Activated CD4-positive, alpha-beta T cell treated with anti-CD3 and anti-CD28 coated beads for 36 hours (primary cell): ENCODE measurements at regions of chr2 and their contacts with region 1.

Region 1: DNA sequence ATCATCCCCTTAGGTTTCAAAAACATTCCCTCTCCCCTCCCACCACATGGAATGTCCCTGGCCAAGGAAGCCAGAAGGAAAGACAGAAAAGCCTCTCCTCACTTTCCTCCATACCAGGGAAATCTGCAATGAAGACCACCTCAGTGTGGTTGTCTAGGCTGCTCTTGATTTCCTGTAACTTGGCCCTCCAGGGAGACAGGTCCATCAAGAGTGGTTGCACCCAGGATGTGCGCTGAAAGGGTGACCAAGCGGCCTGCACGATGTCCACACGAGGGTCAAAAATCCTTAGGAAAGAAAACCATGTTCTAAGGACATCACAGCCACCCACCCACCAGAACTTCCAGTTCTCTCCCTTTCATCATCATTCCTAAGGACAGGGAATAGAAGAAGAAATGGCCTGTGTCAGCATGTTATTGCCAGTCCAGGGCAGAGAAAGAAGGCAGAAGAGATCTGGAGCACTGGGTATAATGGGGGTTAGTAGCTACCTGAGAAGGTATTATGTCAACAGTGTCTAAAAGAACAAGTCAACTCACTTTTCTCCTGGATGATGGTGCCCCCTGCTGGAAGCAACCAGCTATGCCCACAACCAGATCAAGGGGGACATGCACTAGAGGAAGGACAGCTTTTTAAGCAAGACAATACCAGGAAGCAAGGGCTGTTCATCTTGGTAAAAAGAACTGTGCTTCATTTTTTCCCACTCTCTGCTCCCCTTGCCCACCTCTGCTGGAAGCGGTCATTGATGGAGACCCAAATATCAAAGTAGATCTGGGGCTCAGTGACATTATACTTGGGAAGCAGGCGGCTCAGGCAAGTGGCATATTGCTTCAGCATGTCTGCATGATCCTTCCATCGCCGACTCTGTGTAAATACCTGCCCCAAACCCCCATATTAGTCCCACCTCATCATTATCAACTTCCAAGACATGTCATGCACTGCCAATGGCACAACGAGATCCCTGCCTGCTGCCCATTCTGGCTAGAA is 9.3 kb downstream of the GGCX start:
- DNase-seq: peak; percentile 92
- ATAC-seq: peak; percentile 88
- H3K4me3 Mint-ChIP-seq: no peak overlapping the region
- H3K27ac Mint-ChIP-seq: no peak overlapping the region
- H3K4me1 Mint-ChIP-seq: peaks cover 2% of the 10 kb centered on the region
- H3K27me3 Mint-ChIP-seq: no peaks in the 10 kb centered on the region

Region 2: DNA sequence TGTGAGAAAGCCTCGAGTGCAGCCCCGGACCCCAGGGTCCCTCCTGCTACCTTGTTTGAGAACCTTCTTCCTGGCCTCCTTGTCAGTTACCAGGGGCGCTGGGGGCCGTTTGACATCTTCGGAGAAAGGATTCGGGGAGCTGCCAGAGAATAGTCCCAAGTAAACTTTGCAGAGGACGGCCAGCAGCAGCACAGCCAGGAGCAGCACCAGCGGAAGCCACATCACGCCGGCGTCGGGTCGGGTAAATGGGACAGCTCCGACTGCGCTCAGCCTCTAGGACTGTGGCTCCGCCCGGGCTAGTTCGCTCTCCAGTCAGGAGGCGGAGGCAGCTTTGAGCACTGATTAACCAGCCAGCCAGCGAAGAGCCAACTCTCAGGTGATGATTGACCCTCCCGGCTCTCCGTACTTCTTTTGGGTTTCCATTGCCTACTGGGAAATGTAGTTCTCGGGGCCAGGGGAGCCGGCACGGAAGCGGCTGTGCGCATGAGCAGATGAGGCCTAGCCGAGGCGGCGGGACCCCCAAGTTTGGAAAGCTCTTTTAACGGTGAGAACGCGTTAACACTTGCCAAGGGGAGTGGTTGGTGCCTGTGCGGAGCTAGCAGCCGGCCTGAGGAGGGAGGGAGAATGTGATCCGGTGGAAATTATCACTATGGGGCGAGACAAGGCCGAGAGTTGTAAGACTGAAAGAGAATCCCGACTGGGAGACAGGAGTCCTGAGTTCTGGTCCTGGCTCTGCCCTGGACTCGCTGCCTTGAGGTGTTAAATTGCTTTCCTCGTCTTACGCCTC is 197.5 kb before region 1 on chr2 and contains the starts of genes ELMOD3 and RETSAT:
- CTCF ChIA-PET with region 1: interaction called, 6 read pairs
- POLR2A ChIA-PET with region 1: interaction called, 4 read pairs
- intact Hi-C with region 1: loop called in 1 of 2 experiments (anchors 1 kb)
- DNase-seq: peak; percentile 98
- ATAC-seq: peak; percentile 100
- H3K4me3 Mint-ChIP-seq: peak within 1 kb of the TSS; percentile 89
- H3K27ac Mint-ChIP-seq: peak within 1 kb of the TSS; percentile 99
- H3K4me1 Mint-ChIP-seq: peaks cover 34% of the 10 kb centered on the region
- H3K27me3 Mint-ChIP-seq: no peaks in the 10 kb centered on the region
- total RNA-seq, gene ELMOD3: 11.2 to 12.9 TPM
- total RNA-seq, gene RETSAT: 18.1 to 18.7 TPM

Region 3: DNA sequence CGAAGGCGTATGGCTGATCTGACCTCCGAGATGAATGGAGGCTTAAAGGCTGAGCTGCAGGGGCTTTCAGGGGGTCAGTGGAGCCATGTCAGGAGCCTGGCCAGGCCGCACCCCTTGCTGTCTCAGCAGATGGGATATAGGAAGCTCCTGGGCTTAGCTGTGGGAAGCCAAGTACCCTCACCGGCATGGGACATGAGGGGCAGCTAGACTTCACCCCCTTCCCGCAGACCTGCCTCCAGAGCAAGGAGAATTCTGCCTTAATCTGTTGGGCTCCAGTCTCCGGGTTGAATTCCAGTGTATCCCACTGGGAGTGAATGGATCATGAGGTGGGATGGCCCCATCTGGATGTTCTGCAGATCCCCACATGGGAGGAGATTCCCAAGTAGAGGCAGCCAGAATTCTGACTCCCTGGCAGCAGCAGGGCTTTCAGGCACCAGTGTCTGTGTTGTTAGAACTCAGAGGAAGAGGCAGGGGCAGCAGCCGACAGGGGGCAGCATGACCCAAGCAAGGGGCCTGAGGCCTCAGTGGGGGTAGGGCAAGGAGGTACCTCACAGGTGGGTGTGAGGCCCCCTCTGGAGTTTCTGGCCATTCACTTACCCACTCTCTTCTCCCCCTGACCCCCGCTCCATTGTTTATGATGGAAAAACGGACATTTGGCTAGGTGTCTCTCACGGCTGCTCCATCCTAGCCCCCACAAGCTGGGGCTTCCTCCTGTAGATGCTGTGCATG is 160.9 kb before region 1 on chr2:
- CTCF ChIA-PET with region 1: interaction called, 84 read pairs
- POLR2A ChIA-PET with region 1: no interaction called
- intact Hi-C with region 1: loop called (anchors 1 kb)
- DNase-seq: peak; percentile 88
- ATAC-seq: peak; percentile 88
- H3K4me3 Mint-ChIP-seq: no peak overlapping the region
- H3K27ac Mint-ChIP-seq: no peak overlapping the region
- H3K4me1 Mint-ChIP-seq: peaks cover 6% of the 10 kb centered on the region
- H3K27me3 Mint-ChIP-seq: no peaks in the 10 kb centered on the region

Region 4: GRCh38 chr2:85978883-85979780 is 427.1 kb after region 1 on chr2:
- CTCF ChIA-PET with region 1: no interaction called
- POLR2A ChIA-PET with region 1: no interaction called
- intact Hi-C with region 1: no loop called
- DNase-seq: no peak
- ATAC-seq: no peak
- H3K4me3 Mint-ChIP-seq: no peak overlapping the region
- H3K27ac Mint-ChIP-seq: no peak overlapping the region
- H3K4me1 Mint-ChIP-seq: no peaks in the 10 kb centered on the region
- H3K27me3 Mint-ChIP-seq: no peaks in the 10 kb centered on the region